B cell (primary cell): ENCODE measurements at regions of chr6 and their contacts with region 1.

Region 1: GRCh38 chr6:13328076-13328874 is at the start of gene TBC1D7:
- DNase-seq: peak; percentile 95
- ATAC-seq: peak; percentile 86
- H3K4me3 ChIP-seq: peak within 1 kb of the TSS; percentile 69 to 98 (median 88)
- H3K4me3 Mint-ChIP-seq: peak within 1 kb of the TSS; percentile 98
- H3K27ac ChIP-seq: peak within 1 kb of the TSS; percentile 86 to 92
- H3K27ac Mint-ChIP-seq: peak within 1 kb of the TSS; percentile 98
- H3K4me1 ChIP-seq: peaks cover 10 to 15% of the 10 kb centered on the region in 2 donors
- H3K4me1 Mint-ChIP-seq: peaks cover 32% of the 10 kb centered on the region
- H3K27me3 ChIP-seq: no peaks in the 10 kb centered on the region
- H3K27me3 Mint-ChIP-seq: no peaks in the 10 kb centered on the region
- CTCF ChIP-seq: no peak
- total RNA-seq, gene TBC1D7: 22.3 and 26.0 TPM in 2 replicates

Region 2: DNA sequence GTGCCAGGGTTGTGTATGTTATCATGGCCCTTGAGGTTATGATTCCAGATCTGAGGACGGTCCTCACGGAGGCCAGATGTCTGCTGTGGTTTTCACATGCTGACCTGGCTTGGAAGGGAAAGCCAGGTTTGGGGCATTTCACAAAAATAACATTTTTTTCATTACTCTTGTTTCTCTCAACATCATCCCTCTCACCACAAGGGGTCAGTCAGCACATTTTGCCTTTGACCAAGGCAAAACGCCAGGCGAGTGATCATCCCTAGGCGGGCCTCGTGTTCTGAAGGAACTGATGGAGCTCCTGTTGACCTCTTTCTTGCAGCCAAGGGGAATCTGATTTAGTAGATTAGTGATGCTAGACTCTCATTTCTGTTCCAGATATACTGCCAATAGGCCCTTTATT is 133.4 kb before region 1 on chr6:
- CTCF ChIA-PET with region 1: interaction called, 238 read pairs
- POLR2A ChIA-PET with region 1: interaction called, 3 read pairs
- intact Hi-C with region 1: loop called (anchors 1 kb)
- DNase-seq: peak; percentile 80
- ATAC-seq: peak; percentile 70
- H3K4me3 ChIP-seq: no peak overlapping the region
- H3K4me3 Mint-ChIP-seq: no peak overlapping the region
- H3K27ac ChIP-seq: no peak overlapping the region
- H3K27ac Mint-ChIP-seq: peak overlapping the region; percentile 70
- H3K4me1 ChIP-seq: peaks cover 7 to 14% of the 10 kb centered on the region in 2 donors
- H3K4me1 Mint-ChIP-seq: peaks cover 13% of the 10 kb centered on the region
- H3K27me3 ChIP-seq: no peaks in the 10 kb centered on the region
- H3K27me3 Mint-ChIP-seq: peaks cover 13% of the 10 kb centered on the region
- CTCF ChIP-seq: peak; percentile 73

Region 3: GRCh38 chr6:13261464-13261994 is 66.7 kb before region 1 on chr6:
- CTCF ChIA-PET with region 1: interaction called, 20 read pairs
- POLR2A ChIA-PET with region 1: interaction called, 9 read pairs
- intact Hi-C with region 1: no loop called
- DNase-seq: peak; percentile 91
- ATAC-seq: peak; percentile 76
- H3K4me3 ChIP-seq: peak overlapping the region; percentile 25 to 55 (median 36)
- H3K4me3 Mint-ChIP-seq: peak overlapping the region; percentile 75
- H3K27ac ChIP-seq: peak overlapping the region; percentile 93
- H3K27ac Mint-ChIP-seq: peak overlapping the region; percentile 86
- H3K4me1 ChIP-seq: peaks cover 73 to 87% of the 10 kb centered on the region in 2 donors
- H3K4me1 Mint-ChIP-seq: peaks cover 89% of the 10 kb centered on the region
- H3K27me3 ChIP-seq: no peaks in the 10 kb centered on the region
- H3K27me3 Mint-ChIP-seq: no peaks in the 10 kb centered on the region
- CTCF ChIP-seq: no peak

Region 4: GRCh38 chr6:13277836-13278563 is 50.3 kb before region 1 on chr6:
- CTCF ChIA-PET with region 1: interaction called, 16 read pairs
- POLR2A ChIA-PET with region 1: interaction called, 8 read pairs
- intact Hi-C with region 1: loop called (anchors 2 kb)
- DNase-seq: peak; percentile 74
- ATAC-seq: peak; percentile 22
- H3K4me3 ChIP-seq: peak overlapping the region in 1 of 5 experiments; percentile 34
- H3K4me3 Mint-ChIP-seq: peak overlapping the region; percentile 63
- H3K27ac ChIP-seq: peak overlapping the region; percentile 2 to 70
- H3K27ac Mint-ChIP-seq: peak overlapping the region; percentile 57
- H3K4me1 ChIP-seq: peaks cover 49 to 70% of the 10 kb centered on the region in 2 donors
- H3K4me1 Mint-ChIP-seq: peaks cover 71% of the 10 kb centered on the region
- H3K27me3 ChIP-seq: no peaks in the 10 kb centered on the region
- H3K27me3 Mint-ChIP-seq: no peaks in the 10 kb centered on the region
- CTCF ChIP-seq: peak; percentile 61

Region 5: GRCh38 chr6:13302751-13303667 is 25.3 kb before region 1 on chr6:
- CTCF ChIA-PET with region 1: interaction called, 47 read pairs
- POLR2A ChIA-PET with region 1: interaction called, 7 read pairs
- intact Hi-C with region 1: loop called (anchors 1 kb)
- DNase-seq: peak; percentile 69
- ATAC-seq: peak; percentile 40
- H3K4me3 ChIP-seq: peak overlapping the region in 3 of 5 experiments; percentile 8 to 33 (median 16)
- H3K4me3 Mint-ChIP-seq: peak overlapping the region; percentile 76
- H3K27ac ChIP-seq: peak overlapping the region; percentile 76 to 78
- H3K27ac Mint-ChIP-seq: peak overlapping the region; percentile 89
- H3K4me1 ChIP-seq: peaks cover 41 to 46% of the 10 kb centered on the region in 2 donors
- H3K4me1 Mint-ChIP-seq: peaks cover 76% of the 10 kb centered on the region
- H3K27me3 ChIP-seq: no peaks in the 10 kb centered on the region
- H3K27me3 Mint-ChIP-seq: no peaks in the 10 kb centered on the region
- CTCF ChIP-seq: no peak

Region 6: DNA sequence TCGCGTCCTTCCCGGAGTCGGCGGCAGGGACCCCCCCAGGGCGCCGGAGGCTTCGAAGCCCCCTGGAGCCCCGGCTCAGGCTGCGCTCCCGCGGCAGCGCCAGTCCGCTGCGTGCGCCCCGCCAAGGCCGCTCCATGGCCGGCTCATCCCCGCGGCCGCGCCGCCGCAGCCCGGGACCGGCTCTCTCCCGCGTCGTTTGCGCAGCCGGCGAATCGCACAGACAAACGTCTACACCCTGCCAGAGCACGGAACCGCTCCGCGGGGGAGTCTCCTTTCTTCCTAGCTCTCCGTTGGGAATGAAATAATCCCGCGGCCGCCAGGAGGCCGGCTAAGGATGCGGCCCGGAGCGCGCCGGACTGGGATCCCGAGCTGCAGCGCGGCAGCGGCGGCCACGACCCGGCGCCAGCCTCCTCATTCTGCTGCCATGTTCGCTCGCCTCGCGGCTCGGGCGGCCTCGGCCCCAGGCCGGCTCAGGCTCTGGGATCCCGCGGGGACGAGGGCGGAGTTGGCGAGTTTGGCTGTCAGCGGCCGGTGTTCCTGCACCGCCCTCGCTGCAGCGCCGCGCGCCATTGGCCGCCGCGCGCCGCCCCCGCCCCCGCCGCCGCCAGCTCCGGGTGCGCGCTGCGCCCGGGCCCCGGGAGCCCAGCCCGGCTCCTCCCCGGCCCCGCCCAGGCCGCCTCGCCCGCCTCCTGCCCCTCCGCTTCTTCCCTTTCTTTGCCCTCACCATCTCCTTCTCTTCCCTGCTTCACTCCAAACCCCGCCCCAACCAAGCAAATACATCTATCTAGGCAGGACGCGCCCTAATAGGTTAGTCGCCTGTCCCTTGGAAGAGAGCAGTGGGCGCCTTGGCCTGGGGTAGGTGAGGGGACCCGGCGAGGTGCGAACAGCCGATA is 159.1 kb after region 1 on chr6 and contains the start of gene GFOD1:
- CTCF ChIA-PET with region 1: interaction called, 3 read pairs
- POLR2A ChIA-PET with region 1: interaction called, 4 read pairs
- intact Hi-C with region 1: loop called (anchors 2 kb)
- DNase-seq: peak; percentile 89
- ATAC-seq: peak; percentile 81
- H3K4me3 ChIP-seq: peak within 1 kb of the TSS; percentile 51 to 73 (median 66)
- H3K4me3 Mint-ChIP-seq: peak within 1 kb of the TSS; percentile 95
- H3K27ac ChIP-seq: peak within 1 kb of the TSS; percentile 57 to 60
- H3K27ac Mint-ChIP-seq: peak within 1 kb of the TSS; percentile 97
- H3K4me1 ChIP-seq: peaks cover 19 to 38% of the 10 kb centered on the region in 2 donors
- H3K4me1 Mint-ChIP-seq: peaks cover 42% of the 10 kb centered on the region
- H3K27me3 ChIP-seq: no peaks in the 10 kb centered on the region
- H3K27me3 Mint-ChIP-seq: no peaks in the 10 kb centered on the region
- CTCF ChIP-seq: no peak
- total RNA-seq, gene GFOD1: 42.4 and 44.6 TPM in 2 replicates

Region 7: DNA sequence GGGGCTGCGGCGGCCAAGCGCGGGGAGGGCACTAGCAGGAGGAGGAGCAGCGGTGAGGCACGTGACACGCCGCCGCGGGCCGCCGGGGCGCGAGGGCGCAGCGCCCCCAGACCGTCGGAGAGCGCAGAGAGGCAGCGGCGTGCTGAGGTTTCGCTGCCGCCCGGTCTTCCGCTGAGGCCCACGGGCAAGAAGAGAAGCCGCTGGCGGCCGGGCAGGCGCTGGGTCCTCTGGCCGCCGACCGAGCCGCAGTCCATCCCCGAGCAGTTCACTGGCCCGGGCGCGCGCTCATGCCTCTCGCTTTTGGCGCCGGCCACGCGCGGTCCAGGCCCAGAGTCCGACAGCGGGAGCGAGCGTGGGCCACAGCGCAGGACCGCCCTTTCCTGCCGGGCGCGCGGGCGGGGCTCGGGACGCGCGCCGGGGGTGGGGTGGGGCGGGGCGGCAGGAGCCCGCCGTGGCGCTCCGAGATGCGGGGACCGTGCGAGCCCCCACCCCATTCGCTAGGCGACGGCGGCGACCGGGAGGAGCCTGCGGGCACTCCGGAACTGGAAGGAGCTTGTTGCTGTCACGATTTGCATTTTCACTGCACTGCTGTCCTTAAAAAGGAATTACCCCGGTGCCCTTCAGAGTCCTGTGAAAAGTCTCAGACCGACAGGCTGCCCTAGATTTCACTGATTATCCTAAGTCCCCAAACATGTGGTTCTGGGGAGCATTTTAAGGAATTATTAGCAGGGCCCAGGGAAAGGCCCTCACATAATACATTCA is 486.1 kb after region 1 on chr6 and contains the start of gene MCUR1:
- CTCF ChIA-PET with region 1: no interaction called
- POLR2A ChIA-PET with region 1: no interaction called
- intact Hi-C with region 1: loop called (anchors 1 kb)
- DNase-seq: peak; percentile 94
- ATAC-seq: peak; percentile 82
- H3K4me3 ChIP-seq: peak within 1 kb of the TSS; percentile 63 to 88 (median 77)
- H3K4me3 Mint-ChIP-seq: peak within 1 kb of the TSS; percentile 94
- H3K27ac ChIP-seq: peak within 1 kb of the TSS; percentile 68 to 89
- H3K27ac Mint-ChIP-seq: peak within 1 kb of the TSS; percentile 89
- H3K4me1 ChIP-seq: peaks cover 17 to 20% of the 10 kb centered on the region in 2 donors
- H3K4me1 Mint-ChIP-seq: peaks cover 31% of the 10 kb centered on the region
- H3K27me3 ChIP-seq: no peaks in the 10 kb centered on the region
- H3K27me3 Mint-ChIP-seq: no peaks in the 10 kb centered on the region
- CTCF ChIP-seq: peak; percentile 14
- total RNA-seq, gene MCUR1: 10.6 and 11.2 TPM in 2 replicates